ENCODE measurements at regions of chr7 and their contacts with region 1.

Region 1: DNA sequence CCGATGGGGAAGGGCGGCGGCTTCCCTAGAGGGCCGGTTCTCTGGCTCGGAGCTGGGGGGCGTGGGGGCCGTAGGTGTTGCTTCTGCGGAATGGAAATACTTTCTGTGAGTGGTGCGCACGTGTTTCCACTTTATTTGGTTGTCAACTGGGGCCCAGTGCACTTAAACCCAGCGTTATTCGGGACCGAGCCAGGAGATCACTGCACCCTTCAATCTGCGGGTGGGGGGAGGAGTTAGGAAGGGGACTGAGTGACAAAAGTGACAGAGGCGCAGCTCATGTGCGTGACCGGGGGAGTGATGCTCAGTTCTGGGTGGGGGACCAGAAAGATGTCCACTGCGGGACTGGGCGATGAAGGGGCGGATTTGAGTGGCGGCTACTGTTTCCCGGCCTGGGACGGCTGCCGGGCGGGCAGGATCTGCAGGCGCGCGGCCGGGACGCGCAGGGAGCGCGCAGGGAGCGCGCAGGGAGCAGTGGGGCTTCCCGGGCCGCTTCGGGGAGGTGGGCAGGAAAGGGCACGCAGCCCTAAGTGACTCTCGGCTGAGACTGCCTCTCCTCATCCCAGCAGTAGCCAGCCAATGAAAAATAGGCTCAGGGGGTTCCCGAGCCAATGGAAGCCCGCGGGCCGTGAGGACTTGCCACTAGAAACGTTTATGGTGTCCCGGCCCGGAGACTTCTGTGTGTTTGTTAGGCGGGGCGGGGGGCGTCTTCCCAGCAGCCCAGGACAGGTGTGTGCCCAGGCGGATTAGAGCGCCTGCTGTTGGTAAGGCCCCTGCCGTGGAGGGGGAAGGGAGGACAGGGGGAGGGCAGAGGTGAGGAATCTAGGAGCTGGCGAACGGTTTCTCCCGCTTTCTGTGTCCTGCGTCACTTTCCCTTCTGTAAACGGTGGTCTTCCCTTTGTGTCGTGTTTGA is 54.3 kb upstream of the KDM7A start:
- DNase-seq: peak; percentile 89 to 93
- ATAC-seq: peak; percentile 53

Region 2: GRCh38 chr7:139602143-139602722 is 628.9 kb before region 1 on chr7:
- intact Hi-C with region 1: no loop called
- DNase-seq: no peak
- ATAC-seq: peak; percentile 71

Region 3: DNA sequence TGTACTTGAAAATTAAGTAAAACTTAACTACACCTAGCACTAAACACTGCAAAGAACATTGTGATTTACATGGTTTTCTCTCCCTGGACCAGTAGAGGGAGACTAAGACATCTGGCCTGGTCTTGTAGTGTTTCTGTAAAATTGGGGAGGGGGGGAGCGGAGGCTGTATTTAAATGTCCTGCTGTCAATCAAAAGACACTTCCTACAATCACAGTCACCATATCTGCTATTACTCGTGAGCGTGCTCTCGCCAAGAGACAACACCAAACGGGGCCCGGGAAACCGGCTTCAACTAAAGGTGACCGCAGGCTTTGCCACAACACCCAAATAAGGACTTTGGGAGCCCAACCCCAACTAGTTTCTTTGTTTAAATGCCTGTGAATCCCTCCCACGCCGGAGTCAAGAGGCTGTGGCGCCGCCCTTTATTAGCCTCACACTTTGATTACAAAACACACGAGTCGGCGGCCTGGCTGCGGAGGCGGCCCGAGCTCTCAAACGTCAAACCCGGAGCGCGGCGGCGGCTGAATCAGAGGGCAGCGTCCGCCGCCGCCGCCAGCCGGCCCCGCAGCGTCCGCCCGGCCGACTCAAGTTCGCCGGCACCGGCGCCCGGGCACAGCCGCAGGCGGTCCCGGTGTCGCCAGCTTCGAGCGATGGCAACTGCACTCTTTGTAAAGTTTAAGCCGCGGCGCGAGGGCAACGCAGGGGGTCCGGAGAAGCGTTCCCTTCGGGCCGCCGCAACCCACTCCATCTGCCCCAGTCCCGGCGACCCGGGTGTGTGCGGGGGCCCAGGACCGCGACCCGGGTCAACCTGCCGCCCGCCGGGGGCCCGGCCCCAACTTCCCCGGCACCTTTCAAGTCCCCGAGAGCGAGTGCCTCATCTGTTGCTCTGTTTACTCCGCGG is 55.6 kb before region 1 on chr7:
- intact Hi-C with region 1: loop called in 1 of 2 experiments (anchors 10 kb)
- DNase-seq: peak; percentile 92
- ATAC-seq: peak; percentile 66

Region 4: GRCh38 chr7:140696680-140697446 is 465.7 kb after region 1 on chr7 and contains the start of gene NDUFB2:
- intact Hi-C with region 1: no loop called
- DNase-seq: peak; percentile 78
- ATAC-seq: peak; percentile 85
- total RNA-seq, gene NDUFB2: 274 to 319 TPM